ENCODE measurements at regions of chr11 and their contacts with region 1.

Region 1: DNA sequence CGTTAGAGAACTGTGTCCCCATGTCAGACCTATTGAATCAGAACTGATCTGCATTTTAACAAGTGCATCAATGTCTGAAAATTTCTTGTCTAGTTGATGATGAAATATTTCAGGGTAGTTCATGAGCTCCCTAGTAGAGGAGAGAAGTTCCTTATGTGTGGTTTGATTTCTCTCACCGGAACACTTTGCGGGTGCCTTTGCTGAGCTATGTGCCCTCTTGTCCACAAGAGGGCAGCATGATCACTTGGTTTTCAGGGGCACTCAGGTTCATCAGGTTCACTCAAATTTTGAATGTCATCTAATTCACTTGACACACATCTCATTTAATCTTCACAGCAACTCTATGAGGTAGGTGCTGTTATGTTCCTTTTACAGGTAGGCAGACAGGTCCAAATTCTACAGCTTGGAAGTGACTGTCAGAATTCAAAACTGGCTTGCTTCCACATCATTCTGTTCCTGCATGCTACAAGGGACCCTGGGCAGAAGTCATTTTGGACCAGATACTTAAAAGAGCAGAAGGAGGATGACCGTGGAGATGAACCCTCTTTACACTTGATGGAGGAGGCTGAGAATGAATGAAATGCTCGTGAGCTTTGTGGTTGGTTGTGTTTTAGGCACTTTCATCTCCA is 55.6 kb downstream of the P4HA3 start:
- DNase-seq: peak; percentile 35
- H3K4me3 Mint-ChIP-seq: no peak overlapping the region
- H3K27ac Mint-ChIP-seq: no peak overlapping the region
- H3K4me1 Mint-ChIP-seq: peaks cover 5% of the 10 kb centered on the region
- H3K27me3 Mint-ChIP-seq: peaks cover 2% of the 10 kb centered on the region

Region 2: GRCh38 chr11:74004759-74005615 is 250.9 kb before region 1 on chr11:
- intact Hi-C with region 1: no loop called
- DNase-seq: peak; percentile 84
- H3K4me3 Mint-ChIP-seq: peak overlapping the region; percentile 73
- H3K27ac Mint-ChIP-seq: peak overlapping the region; percentile 98
- H3K4me1 Mint-ChIP-seq: peaks cover 87% of the 10 kb centered on the region
- H3K27me3 Mint-ChIP-seq: no peaks in the 10 kb centered on the region

Region 3: GRCh38 chr11:74232311-74232950 is 23.4 kb before region 1 on chr11:
- intact Hi-C with region 1: no loop called
- DNase-seq: no peak
- H3K4me3 Mint-ChIP-seq: no peak overlapping the region
- H3K27ac Mint-ChIP-seq: no peak overlapping the region
- H3K4me1 Mint-ChIP-seq: peaks cover 13% of the 10 kb centered on the region
- H3K27me3 Mint-ChIP-seq: no peaks in the 10 kb centered on the region

Region 4: GRCh38 chr11:74321487-74322188 is 65.8 kb after region 1 on chr11:
- intact Hi-C with region 1: loop called (anchors 1 kb)
- DNase-seq: no peak
- H3K4me3 Mint-ChIP-seq: no peak overlapping the region
- H3K27ac Mint-ChIP-seq: no peak overlapping the region
- H3K4me1 Mint-ChIP-seq: no peaks in the 10 kb centered on the region
- H3K27me3 Mint-ChIP-seq: peaks cover 19% of the 10 kb centered on the region

Region 5: GRCh38 chr11:74347381-74347780 is 91.5 kb after region 1 on chr11:
- intact Hi-C with region 1: no loop called
- DNase-seq: no peak
- H3K4me3 Mint-ChIP-seq: no peak overlapping the region
- H3K27ac Mint-ChIP-seq: no peak overlapping the region
- H3K4me1 Mint-ChIP-seq: no peaks in the 10 kb centered on the region
- H3K27me3 Mint-ChIP-seq: no peaks in the 10 kb centered on the region

Region 6: GRCh38 chr11:74506823-74507222 is 251.0 kb after region 1 on chr11:
- intact Hi-C with region 1: no loop called
- DNase-seq: no peak
- H3K4me3 Mint-ChIP-seq: no peak overlapping the region
- H3K27ac Mint-ChIP-seq: no peak overlapping the region
- H3K4me1 Mint-ChIP-seq: no peaks in the 10 kb centered on the region
- H3K27me3 Mint-ChIP-seq: peaks cover 2% of the 10 kb centered on the region

Region 7: DNA sequence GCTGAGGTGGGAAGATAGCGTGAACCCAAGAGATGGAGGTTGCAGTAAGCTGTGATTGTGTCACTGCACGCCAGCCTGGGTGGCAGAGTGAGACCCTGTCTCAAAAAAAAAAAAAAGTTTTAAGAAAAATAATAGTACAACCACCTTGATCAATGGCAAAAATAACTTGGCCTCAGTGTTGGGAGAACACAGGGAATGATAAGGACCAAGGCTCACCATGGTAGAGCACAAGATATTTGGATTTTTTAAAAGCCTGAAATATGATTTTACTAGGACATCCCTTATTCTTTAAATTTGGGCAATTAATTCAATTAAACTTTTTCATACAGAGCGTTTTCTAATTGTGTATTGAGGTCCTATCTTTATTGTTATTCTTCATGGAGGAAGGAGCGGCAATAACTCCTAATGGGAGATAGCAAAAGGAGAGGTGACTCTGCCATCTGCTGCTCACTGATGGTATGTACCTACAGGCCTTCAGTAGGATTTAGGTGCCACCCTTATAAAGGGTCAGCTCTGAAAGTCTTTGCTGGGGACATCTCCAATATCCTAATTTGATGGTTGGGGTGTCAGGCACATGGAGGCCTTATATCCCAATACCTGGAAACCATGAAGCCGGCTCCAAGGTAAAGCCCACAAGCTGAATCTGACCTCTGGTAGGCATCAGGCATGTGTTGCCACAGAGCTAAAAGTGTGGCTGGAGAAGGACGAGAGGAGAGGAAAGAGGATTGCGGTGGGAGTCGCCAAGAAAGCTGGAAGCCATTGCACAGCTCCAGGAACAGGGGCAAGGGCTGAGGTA is 314.6 kb after region 1 on chr11:
- intact Hi-C with region 1: loop called (anchors 5 kb)
- DNase-seq: no peak
- H3K4me3 Mint-ChIP-seq: no peak overlapping the region
- H3K27ac Mint-ChIP-seq: no peak overlapping the region
- H3K4me1 Mint-ChIP-seq: no peaks in the 10 kb centered on the region
- H3K27me3 Mint-ChIP-seq: peaks cover 2% of the 10 kb centered on the region

Measured in activated T-helper 1 cell treated with anti-CD3 and anti-CD28 coated beads, Interleukin-12 subunit alpha, Interleukin-12 subunit beta, Interleukin-2, Interleukin-4 antibody, amounts not matched to agents 30 ng/mL and 10 ng/mL and 1 ng/mL, durations not matched to agents 14 hours and 24 hours and 36 hours (primary cell).